Dorsolateral prefrontal cortex (tissue), 120 donors: ENCODE measurements at regions of chr19 and their contacts with region 1.

Region 1: GRCh38 chr19:9934132-9934950 is 2.0 kb downstream of the OLFM2 start:
- DNase-seq: peak; percentile 29 to 81 (median 71)
- H3K4me3 ChIP-seq: peak overlapping the region in 50 of 59 donors; percentile 4 to 70 (median 55)
- H3K27ac ChIP-seq: peak overlapping the region in 37 of 59 donors; percentile 5 to 79 (median 54)
- H3K27me3 ChIP-seq: peaks cover 0 to 60% (median 23%) of the 10 kb centered on the region in 45 donors
- CTCF ChIP-seq: peak; percentile 42 to 89 (median 79)

Region 2: GRCh38 chr19:9971166-9971897 is 37.0 kb after region 1 on chr19:
- intact Hi-C with region 1: no loop called
- DNase-seq: no peak
- H3K4me3 ChIP-seq: no peak overlapping the region
- H3K27ac ChIP-seq: no peak overlapping the region
- H3K27me3 ChIP-seq: peaks cover 0 to 9% (median 0%) of the 10 kb centered on the region in 45 donors
- CTCF ChIP-seq: no peak

Region 3: DNA sequence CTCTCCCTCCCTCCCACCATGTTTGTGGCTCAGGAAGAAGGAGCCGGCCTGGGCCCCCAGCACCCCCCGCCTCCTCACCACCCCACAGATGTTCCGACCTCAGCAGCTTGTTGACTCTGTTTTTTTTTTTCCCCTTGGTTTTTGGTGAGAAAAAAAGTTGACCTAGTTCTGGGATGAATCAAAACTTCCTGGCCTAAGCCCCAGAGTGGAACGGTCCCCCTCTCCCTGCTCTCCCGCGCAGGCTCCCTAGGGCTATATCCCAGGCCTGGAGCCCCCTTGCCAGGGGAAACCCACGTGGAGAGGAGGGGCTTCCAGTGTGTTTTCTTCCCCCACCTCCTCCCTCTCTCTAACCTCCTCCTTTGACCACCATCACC is 72.0 kb after region 1 on chr19:
- intact Hi-C with region 1: loop called in 1 of 2 experiments (anchors 5 kb)
- DNase-seq: no peak
- H3K4me3 ChIP-seq: peak overlapping the region in 6 of 59 donors; percentile 1 to 8 (median 6)
- H3K27ac ChIP-seq: peak overlapping the region in 36 of 59 donors; percentile 9 to 81 (median 54)
- H3K27me3 ChIP-seq: peaks cover 0 to 43% (median 18%) of the 10 kb centered on the region in 45 donors
- CTCF ChIP-seq: no peak

Region 4: GRCh38 chr19:10027158-10027693 is 92.9 kb after region 1 on chr19:
- intact Hi-C with region 1: loop called (anchors 1 kb)
- DNase-seq: no peak
- H3K4me3 ChIP-seq: peak overlapping the region in 41 of 59 donors; percentile 3 to 51 (median 32)
- H3K27ac ChIP-seq: peak overlapping the region in 3 of 59 donors; percentile 31 to 44 (median 42)
- H3K27me3 ChIP-seq: peaks cover 0 to 6% (median 0%) of the 10 kb centered on the region in 45 donors
- CTCF ChIP-seq: no peak

Region 5: GRCh38 chr19:10112895-10113591 is 178.7 kb after region 1 on chr19:
- intact Hi-C with region 1: loop called (anchors 5 kb)
- DNase-seq: peak in 3 of 10 donors; percentile 20 to 54 (median 33)
- H3K4me3 ChIP-seq: peak overlapping the region in 4 of 59 donors; percentile 14 to 39 (median 17)
- H3K27ac ChIP-seq: peak overlapping the region in 17 of 59 donors; percentile 4 to 42 (median 16)
- H3K27me3 ChIP-seq: no peaks in the 10 kb centered on the region
- CTCF ChIP-seq: peak in 53 of 56 donors; percentile 18 to 66 (median 49)

Region 6: GRCh38 chr19:10390652-10391286 is 456.4 kb after region 1 on chr19:
- intact Hi-C with region 1: loop called in 1 of 2 experiments (anchors 5 kb)
- DNase-seq: peak in 9 of 10 donors; percentile 44 to 81 (median 69)
- H3K4me3 ChIP-seq: no peak overlapping the region
- H3K27ac ChIP-seq: no peak overlapping the region
- H3K27me3 ChIP-seq: no peaks in the 10 kb centered on the region
- CTCF ChIP-seq: peak; percentile 53 to 91 (median 82)